Panc1 (cell line): ENCODE measurements at regions of chr13 and their contacts with region 1.

Region 1: DNA sequence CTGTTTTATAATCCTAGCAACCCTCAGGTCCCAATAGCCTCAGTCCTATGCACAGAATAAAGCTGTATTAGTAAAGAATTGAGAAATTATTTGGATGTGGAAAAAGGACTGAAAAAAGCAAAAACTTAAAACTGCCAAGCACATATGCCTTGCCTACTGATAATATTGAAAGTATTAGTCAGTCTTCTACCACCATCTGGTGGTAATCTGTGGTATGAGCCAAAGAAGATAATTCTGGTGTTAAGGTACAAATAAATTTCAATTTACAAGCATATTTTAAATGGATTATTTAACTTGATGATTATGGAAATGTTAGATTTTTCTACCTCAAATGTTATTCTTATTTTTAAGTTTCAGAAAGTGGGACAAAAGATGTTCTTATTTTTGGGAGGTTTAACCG is 460.3 kb upstream of the KLHL1 start:
- DNase-seq: peak; percentile 27
- ATAC-seq: no peak
- H3K4me3 ChIP-seq: peak overlapping the region; percentile 21 to 43; a peak in 2 of 4 replicates
- H3K27ac ChIP-seq: no peak overlapping the region
- H3K4me1 ChIP-seq: no peaks in the 10 kb centered on the region
- H3K27me3 ChIP-seq: no peaks in the 10 kb centered on the region
- CTCF ChIP-seq: peak; percentile 47; the same call in 1 of the 2 replicates

Region 2: GRCh38 chr13:68984688-68985319 is 1583.8 kb before region 1 on chr13:
- CTCF ChIA-PET with region 1: no interaction called
- POLR2A ChIA-PET with region 1: no interaction called
- in situ Hi-C with region 1: no loop called
- intact Hi-C with region 1: loop called (anchors 10 kb)
- DNase-seq: no peak
- ATAC-seq: no peak
- H3K4me3 ChIP-seq: no peak overlapping the region
- H3K27ac ChIP-seq: no peak overlapping the region
- H3K4me1 ChIP-seq: no peaks in the 10 kb centered on the region
- H3K27me3 ChIP-seq: no peaks in the 10 kb centered on the region
- CTCF ChIP-seq: no peak

Region 3: DNA sequence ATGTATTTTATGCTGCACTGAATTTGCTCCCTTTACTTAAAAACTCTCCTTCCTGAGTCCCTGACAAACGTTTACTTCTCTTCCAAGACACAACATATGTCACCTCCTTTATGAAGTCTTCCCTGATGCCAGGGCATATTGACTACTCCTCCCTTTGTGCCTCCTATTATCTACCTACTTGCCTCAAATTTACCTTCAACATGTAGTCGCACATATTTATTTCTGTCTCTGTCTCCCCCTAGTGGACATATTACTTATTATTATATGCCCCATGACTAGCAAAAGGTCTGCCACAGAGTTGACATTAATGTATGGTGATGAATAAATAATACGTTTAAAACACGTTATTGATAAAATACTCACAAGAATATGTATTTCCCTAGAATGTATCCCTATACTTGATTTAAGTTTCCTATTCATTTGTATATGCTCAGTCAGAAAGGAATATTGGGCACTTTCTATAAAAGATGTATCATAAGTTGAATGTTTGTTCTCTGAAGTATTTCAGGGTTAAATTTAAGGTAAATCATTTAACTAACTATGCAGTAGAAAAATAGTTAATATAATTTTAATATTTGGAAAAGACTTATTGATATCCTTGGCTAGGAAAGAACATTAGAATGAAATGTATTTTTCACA is 711.3 kb before region 1 on chr13:
- CTCF ChIA-PET with region 1: no interaction called
- POLR2A ChIA-PET with region 1: no interaction called
- in situ Hi-C with region 1: no loop called
- intact Hi-C with region 1: loop called (anchors 2 kb)
- DNase-seq: peak; percentile 10
- ATAC-seq: peak; percentile 58; the same call in 1 of the 2 replicates
- H3K4me3 ChIP-seq: no peak overlapping the region
- H3K27ac ChIP-seq: no peak overlapping the region
- H3K4me1 ChIP-seq: no peaks in the 10 kb centered on the region
- H3K27me3 ChIP-seq: no peaks in the 10 kb centered on the region
- CTCF ChIP-seq: peak; percentile 49; the same call in 1 of the 2 replicates

Region 4: DNA sequence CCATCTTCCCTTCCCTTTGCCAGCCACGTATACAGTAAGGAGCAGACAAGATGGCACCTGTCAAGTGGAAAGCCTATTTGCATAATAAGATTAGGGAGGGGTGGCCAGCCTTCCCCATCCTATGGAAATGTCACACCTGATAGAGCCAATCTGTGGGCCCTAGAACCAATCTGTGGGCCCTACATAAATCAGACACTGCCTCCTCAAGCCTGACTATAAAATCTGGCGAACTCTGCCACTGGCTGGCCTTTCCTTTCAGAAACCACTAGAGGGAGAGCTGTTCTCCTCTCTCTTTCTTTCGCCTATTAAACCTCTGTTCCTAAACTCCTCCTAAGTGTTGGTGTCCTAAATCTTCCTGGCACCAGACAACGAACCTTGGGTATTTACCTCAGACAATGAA is 228.8 kb before region 1 on chr13:
- CTCF ChIA-PET with region 1: no interaction called
- POLR2A ChIA-PET with region 1: no interaction called
- in situ Hi-C with region 1: no loop called
- intact Hi-C with region 1: loop called (anchors 10 kb)
- DNase-seq: peak; percentile 4
- ATAC-seq: no peak
- H3K4me3 ChIP-seq: no peak overlapping the region
- H3K27ac ChIP-seq: no peak overlapping the region
- H3K4me1 ChIP-seq: no peaks in the 10 kb centered on the region
- H3K27me3 ChIP-seq: no peaks in the 10 kb centered on the region
- CTCF ChIP-seq: peak; percentile 56

Region 5: GRCh38 chr13:70386919-70387318 is 181.7 kb before region 1 on chr13:
- CTCF ChIA-PET with region 1: no interaction called
- POLR2A ChIA-PET with region 1: no interaction called
- in situ Hi-C with region 1: no loop called
- intact Hi-C with region 1: no loop called
- DNase-seq: no peak
- ATAC-seq: no peak
- H3K4me3 ChIP-seq: no peak overlapping the region
- H3K27ac ChIP-seq: no peak overlapping the region
- H3K4me1 ChIP-seq: no peaks in the 10 kb centered on the region
- H3K27me3 ChIP-seq: no peaks in the 10 kb centered on the region
- CTCF ChIP-seq: no peak

Region 6: DNA sequence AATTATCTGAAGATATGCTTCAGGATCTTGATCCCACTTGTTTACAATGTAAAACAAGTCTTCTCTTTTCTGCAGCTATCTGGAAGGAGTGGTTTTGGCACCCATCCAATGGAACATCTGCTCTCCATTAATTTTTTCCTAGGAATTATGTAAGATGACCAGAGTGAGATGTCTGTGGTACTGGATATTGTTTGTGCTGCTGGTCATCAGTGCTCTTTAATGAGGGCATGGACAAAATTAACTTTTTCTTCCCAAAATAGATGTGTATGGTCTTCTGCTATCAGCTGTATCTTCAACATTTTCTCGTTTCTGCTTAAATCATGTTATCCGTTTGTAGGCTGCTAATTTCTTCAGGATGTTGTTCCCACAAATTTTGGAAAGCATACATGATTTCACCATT is 44.9 kb before region 1 on chr13:
- CTCF ChIA-PET with region 1: no interaction called
- POLR2A ChIA-PET with region 1: no interaction called
- in situ Hi-C with region 1: no loop called
- intact Hi-C with region 1: no loop called
- DNase-seq: no peak
- ATAC-seq: no peak
- H3K4me3 ChIP-seq: no peak overlapping the region
- H3K27ac ChIP-seq: no peak overlapping the region
- H3K4me1 ChIP-seq: no peaks in the 10 kb centered on the region
- H3K27me3 ChIP-seq: no peaks in the 10 kb centered on the region
- CTCF ChIP-seq: no peak

Region 7: GRCh38 chr13:70541451-70541850 is 27.1 kb before region 1 on chr13:
- CTCF ChIA-PET with region 1: no interaction called
- POLR2A ChIA-PET with region 1: no interaction called
- in situ Hi-C with region 1: no loop called
- intact Hi-C with region 1: no loop called
- DNase-seq: no peak
- ATAC-seq: no peak
- H3K4me3 ChIP-seq: no peak overlapping the region
- H3K27ac ChIP-seq: no peak overlapping the region
- H3K4me1 ChIP-seq: no peaks in the 10 kb centered on the region
- H3K27me3 ChIP-seq: no peaks in the 10 kb centered on the region
- CTCF ChIP-seq: no peak

Region 8: GRCh38 chr13:70945506-70945905 is 376.9 kb after region 1 on chr13:
- CTCF ChIA-PET with region 1: no interaction called
- POLR2A ChIA-PET with region 1: no interaction called
- in situ Hi-C with region 1: no loop called
- intact Hi-C with region 1: no loop called
- DNase-seq: no peak
- ATAC-seq: no peak
- H3K4me3 ChIP-seq: no peak overlapping the region
- H3K27ac ChIP-seq: no peak overlapping the region
- H3K4me1 ChIP-seq: no peaks in the 10 kb centered on the region
- H3K27me3 ChIP-seq: no peaks in the 10 kb centered on the region
- CTCF ChIP-seq: no peak